Activated CD4-positive, alpha-beta T cell treated with anti-CD3 and anti-CD28 coated beads for 36 hours (primary cell): ENCODE measurements at regions of chr5 and their contacts with region 1.

Region 1: GRCh38 chr5:168836603-168837231 is 257.5 kb upstream of the PANK3 start:
- DNase-seq: peak; percentile 59
- ATAC-seq: peak; percentile 84
- H3K4me3 Mint-ChIP-seq: peak overlapping the region; percentile 73
- H3K27ac Mint-ChIP-seq: peak overlapping the region; percentile 90
- H3K4me1 Mint-ChIP-seq: peaks cover 59% of the 10 kb centered on the region
- H3K27me3 Mint-ChIP-seq: peaks cover 11% of the 10 kb centered on the region

Region 2: DNA sequence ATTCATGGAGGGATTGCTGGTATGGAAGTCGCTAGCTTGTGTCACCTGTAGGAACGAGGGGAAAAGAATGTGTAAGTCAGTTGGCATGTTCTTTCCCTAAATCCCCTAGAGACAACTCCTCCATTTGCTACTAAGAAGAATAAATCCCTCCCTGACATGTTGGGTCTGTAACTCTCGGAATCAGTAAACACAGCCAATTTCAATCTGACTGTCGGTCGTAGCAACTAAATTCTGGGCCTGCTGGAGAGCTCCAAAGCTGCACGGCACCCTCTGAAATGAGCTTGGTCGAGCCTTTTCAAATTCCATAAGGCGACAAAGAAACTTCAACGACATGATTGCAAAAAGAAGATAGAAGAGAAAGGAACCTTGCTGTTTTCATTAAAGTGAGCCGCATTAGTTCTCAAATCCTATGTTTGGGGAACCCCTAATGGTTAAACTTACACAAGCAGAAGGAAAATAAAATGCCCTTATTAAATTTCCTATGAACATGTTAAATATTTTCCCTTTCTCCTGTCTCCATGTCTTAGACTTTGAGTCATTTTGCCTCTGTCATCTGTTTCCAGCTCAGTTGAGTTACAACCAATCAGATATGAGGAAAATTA is 1281.1 kb before region 1 on chr5:
- CTCF ChIA-PET with region 1: no interaction called
- POLR2A ChIA-PET with region 1: no interaction called
- intact Hi-C with region 1: no loop called
- DNase-seq: no peak
- ATAC-seq: no peak
- H3K4me3 Mint-ChIP-seq: no peak overlapping the region
- H3K27ac Mint-ChIP-seq: no peak overlapping the region
- H3K4me1 Mint-ChIP-seq: no peaks in the 10 kb centered on the region
- H3K27me3 Mint-ChIP-seq: no peaks in the 10 kb centered on the region

Region 3: DNA sequence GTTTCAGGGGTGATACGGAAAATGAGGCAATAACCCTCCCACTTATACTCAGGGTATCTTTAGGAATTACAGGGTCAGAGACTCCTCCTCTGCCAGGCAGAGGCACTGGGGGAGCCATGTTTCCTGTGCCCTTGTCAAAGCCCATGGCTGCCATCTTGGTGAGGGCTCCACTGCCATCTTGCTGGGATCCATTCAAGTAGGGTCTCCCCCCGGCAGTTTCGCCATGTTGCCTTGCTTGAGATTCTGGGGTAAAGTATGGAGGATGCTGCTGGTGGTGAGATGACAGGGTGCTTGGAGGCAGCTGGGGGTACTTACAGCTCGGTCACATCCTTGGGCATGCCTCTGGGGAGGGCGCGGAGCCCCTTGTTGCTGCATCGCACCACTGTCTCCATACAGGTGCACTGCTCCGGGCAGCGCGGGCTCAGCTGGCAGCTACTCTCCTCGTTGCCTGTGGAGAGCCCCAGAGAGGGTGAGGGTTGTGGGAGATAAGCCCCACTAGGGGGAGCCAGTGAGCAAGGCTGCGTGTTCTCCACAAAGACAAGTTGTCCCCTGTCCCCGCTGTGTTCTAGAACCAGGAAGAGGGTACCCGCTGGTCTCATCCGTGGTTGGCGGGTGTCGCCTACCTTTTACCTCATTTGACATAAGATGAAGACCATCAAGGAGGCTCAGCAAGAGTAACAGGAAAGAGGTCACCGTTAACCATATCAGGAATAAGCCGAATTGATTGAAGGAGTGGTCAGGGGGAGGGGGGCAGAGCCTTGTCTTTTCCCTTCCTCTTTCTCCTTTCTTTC is 88.5 kb before region 1 on chr5:
- CTCF ChIA-PET with region 1: no interaction called
- POLR2A ChIA-PET with region 1: no interaction called
- intact Hi-C with region 1: loop called in 1 of 2 experiments (anchors 5 kb)
- DNase-seq: peak; percentile 84
- ATAC-seq: peak; percentile 96
- H3K4me3 Mint-ChIP-seq: no peak overlapping the region
- H3K27ac Mint-ChIP-seq: no peak overlapping the region
- H3K4me1 Mint-ChIP-seq: peaks cover 10% of the 10 kb centered on the region
- H3K27me3 Mint-ChIP-seq: peaks cover 7% of the 10 kb centered on the region

Region 4: GRCh38 chr5:168802337-168802736 is 34.4 kb before region 1 on chr5:
- CTCF ChIA-PET with region 1: no interaction called
- POLR2A ChIA-PET with region 1: no interaction called
- intact Hi-C with region 1: loop called (anchors 1 kb)
- DNase-seq: peak; percentile 68
- ATAC-seq: peak; percentile 60
- H3K4me3 Mint-ChIP-seq: peak overlapping the region; percentile 52
- H3K27ac Mint-ChIP-seq: peak overlapping the region; percentile 91
- H3K4me1 Mint-ChIP-seq: peaks cover 49% of the 10 kb centered on the region
- H3K27me3 Mint-ChIP-seq: peaks cover 13% of the 10 kb centered on the region

Region 5: DNA sequence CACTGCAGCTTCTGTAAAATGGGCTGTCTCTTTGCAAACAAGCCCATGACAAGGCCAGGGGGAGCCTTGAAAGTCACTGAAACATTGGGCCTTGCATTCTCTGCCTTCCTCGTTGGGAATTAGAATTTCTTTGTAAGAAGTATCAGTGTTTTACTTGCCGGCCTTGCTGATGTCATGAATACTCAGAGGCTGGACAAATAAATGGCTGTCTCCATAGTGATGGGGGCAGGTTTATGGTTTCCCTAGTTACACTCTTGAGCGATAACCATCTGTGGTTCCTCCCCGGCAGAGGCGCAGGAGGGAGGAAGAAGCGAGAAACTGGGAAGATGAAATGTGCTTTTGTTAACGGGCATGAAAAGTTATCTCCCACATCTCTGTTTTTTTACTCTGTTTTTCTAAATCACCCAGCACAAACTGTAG is 15.2 kb after region 1 on chr5:
- CTCF ChIA-PET with region 1: interaction called, 5 read pairs
- POLR2A ChIA-PET with region 1: interaction called, 3 read pairs
- intact Hi-C with region 1: loop called (anchors 1 kb)
- DNase-seq: peak; percentile 63
- ATAC-seq: peak; percentile 59
- H3K4me3 Mint-ChIP-seq: peak overlapping the region; percentile 59
- H3K27ac Mint-ChIP-seq: peak overlapping the region; percentile 84
- H3K4me1 Mint-ChIP-seq: peaks cover 43% of the 10 kb centered on the region
- H3K27me3 Mint-ChIP-seq: peaks cover 2% of the 10 kb centered on the region

Region 6: GRCh38 chr5:168947212-168947868 is 110.6 kb after region 1 on chr5:
- CTCF ChIA-PET with region 1: interaction called, 3 read pairs
- POLR2A ChIA-PET with region 1: no interaction called
- intact Hi-C with region 1: loop called (anchors 1 to 5 kb)
- DNase-seq: peak; percentile 73
- ATAC-seq: peak; percentile 58
- H3K4me3 Mint-ChIP-seq: no peak overlapping the region
- H3K27ac Mint-ChIP-seq: no peak overlapping the region
- H3K4me1 Mint-ChIP-seq: peaks cover 8% of the 10 kb centered on the region
- H3K27me3 Mint-ChIP-seq: no peaks in the 10 kb centered on the region

Region 7: DNA sequence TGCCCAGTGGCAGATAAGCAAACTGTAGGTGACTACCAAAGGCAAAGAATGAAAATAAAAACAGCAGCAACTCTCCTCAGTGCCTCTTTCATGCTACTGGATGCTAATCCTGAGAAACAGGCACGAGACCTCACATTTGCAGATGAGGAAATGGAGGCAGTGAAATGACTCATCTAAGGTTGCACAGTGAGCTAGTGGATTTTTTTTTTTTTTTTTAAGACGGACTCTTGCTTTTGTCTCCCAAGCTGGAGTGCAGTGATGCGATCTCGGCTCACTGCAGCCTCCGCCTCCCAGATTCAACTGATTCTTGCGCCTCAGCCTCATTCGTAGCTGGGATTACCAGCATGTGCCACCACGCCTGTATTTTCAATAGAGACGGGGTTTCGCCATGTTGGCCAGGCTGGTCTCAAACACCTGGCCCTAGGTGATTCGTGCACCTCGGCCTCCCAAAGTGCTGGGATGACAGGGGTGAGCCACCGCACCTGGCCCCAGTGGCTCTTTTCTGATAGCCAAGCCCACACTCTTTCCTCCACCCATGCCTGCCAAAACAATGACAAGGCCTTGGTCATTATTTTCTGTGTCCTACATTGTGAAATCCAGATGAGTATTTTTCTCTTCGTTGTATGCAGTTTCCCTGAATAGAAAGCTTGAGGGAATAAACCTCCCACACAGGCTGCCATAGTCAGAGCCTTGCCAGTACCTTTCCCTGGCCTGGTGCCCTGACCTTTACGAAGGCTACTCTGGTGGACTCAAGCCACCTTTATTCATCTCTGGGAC is 819.6 kb after region 1 on chr5:
- CTCF ChIA-PET with region 1: no interaction called
- POLR2A ChIA-PET with region 1: no interaction called
- intact Hi-C with region 1: loop called (anchors 2 to 10 kb)
- DNase-seq: peak; percentile 40
- ATAC-seq: peak; percentile 59
- H3K4me3 Mint-ChIP-seq: no peak overlapping the region
- H3K27ac Mint-ChIP-seq: peak overlapping the region; percentile 79
- H3K4me1 Mint-ChIP-seq: peaks cover 67% of the 10 kb centered on the region
- H3K27me3 Mint-ChIP-seq: no peaks in the 10 kb centered on the region